ENCODE measurements at regions of chr10 and their contacts with region 1.

Region 1: GRCh38 chr10:114876602-114877300 is 55.2 kb downstream of the FHIP2A start:
- DNase-seq: peak; percentile 43 to 73 (median 59)
- ATAC-seq: peak; percentile 96
- H3K4me3 ChIP-seq: no peak overlapping the region
- H3K27ac ChIP-seq: no peak overlapping the region
- H3K4me1 ChIP-seq: peaks cover 0 to 2% of the 10 kb centered on the region in 2 experiments; a peak in 2 of 5 replicates
- H3K27me3 ChIP-seq: peaks cover 0 to 7% of the 10 kb centered on the region in 2 experiments; a peak in 1 of 5 replicates
- CTCF ChIP-seq: peak; percentile 77 to 96 (median 87)
- EP300 ChIP-seq: no peak
- POLR2A ChIP-seq: no peak
- RAD21 ChIP-seq: peak; percentile 72 to 79

Region 2: DNA sequence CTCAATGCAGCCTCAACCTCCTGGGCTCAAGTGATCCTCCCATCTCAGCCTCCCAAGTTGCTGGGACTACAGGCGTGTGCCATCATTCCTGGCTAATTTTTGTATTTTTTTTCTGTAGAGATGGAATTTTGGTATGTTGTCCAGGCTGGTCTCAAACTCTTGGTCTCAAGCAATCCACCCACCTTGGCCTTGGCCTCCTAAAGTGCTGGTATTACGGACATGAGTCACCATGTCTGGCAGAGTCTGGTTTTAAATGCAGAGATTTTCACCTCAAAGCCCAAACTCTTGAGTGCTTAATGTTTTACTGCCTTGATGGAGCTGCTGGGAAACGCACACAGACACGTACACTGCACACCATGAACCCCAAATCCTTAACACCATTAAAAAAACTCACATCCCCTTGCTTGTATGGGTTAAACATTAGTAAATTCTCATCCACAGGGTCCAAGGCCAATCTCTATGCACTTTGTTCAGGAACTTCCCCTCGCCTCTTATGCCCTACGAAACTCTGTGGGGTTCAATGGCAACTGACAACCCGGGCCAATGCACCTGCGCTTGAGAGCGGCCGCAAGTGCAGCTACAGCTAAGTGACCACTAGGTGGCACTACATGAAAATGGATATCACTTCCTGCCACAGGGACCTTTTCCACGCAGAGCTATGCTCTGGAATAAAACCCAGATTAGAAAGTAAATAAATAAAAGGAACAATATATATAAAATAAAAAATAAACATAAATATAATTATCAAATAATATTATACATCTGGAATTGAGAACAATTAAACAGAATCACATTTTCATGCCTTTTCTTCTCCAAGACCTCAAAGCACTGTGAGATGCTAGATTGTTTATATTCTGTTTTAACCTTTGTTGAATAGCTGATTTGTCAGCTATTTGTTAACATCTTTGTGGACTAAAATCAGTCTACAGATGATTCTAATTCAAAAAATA is 405.5 kb before region 1 on chr10:
- CTCF ChIA-PET with region 1: no interaction called
- POLR2A ChIA-PET with region 1: no interaction called
- in situ Hi-C with region 1: no loop called
- intact Hi-C with region 1: loop called (anchors 5 kb)
- DNase-seq: peak; percentile 41 to 62 (median 60)
- ATAC-seq: peak; percentile 90
- H3K4me3 ChIP-seq: no peak overlapping the region
- H3K27ac ChIP-seq: no peak overlapping the region
- H3K4me1 ChIP-seq: no peaks in the 10 kb centered on the region
- H3K27me3 ChIP-seq: peaks cover 0 to 3% of the 10 kb centered on the region in 2 experiments; a peak in 1 of 5 replicates
- CTCF ChIP-seq: peak; percentile 63 to 67 (median 65)
- EP300 ChIP-seq: no peak
- POLR2A ChIP-seq: no peak
- RAD21 ChIP-seq: peak; percentile 35 to 47; a peak in 2 of 4 replicates

Region 3: GRCh38 chr10:114550756-114551635 is 325.8 kb before region 1 on chr10:
- CTCF ChIA-PET with region 1: no interaction called
- POLR2A ChIA-PET with region 1: no interaction called
- in situ Hi-C with region 1: no loop called
- intact Hi-C with region 1: loop called (anchors 5 kb)
- DNase-seq: peak in 1 of 4 experiments; percentile 5
- ATAC-seq: no peak
- H3K4me3 ChIP-seq: no peak overlapping the region
- H3K27ac ChIP-seq: no peak overlapping the region
- H3K4me1 ChIP-seq: no peaks in the 10 kb centered on the region
- H3K27me3 ChIP-seq: no peaks in the 10 kb centered on the region
- CTCF ChIP-seq: peak in 2 of 3 experiments; percentile 29 to 39; a peak in 2 of 6 replicates
- EP300 ChIP-seq: no peak
- POLR2A ChIP-seq: no peak
- RAD21 ChIP-seq: peak; percentile 37 to 54

Region 4: GRCh38 chr10:114825513-114826253 is 51.1 kb before region 1 on chr10:
- CTCF ChIA-PET with region 1: no interaction called
- POLR2A ChIA-PET with region 1: no interaction called
- in situ Hi-C with region 1: no loop called
- intact Hi-C with region 1: no loop called
- DNase-seq: no peak
- ATAC-seq: no peak
- H3K4me3 ChIP-seq: no peak overlapping the region
- H3K27ac ChIP-seq: no peak overlapping the region
- H3K4me1 ChIP-seq: no peaks in the 10 kb centered on the region; a peak in 2 of 5 replicates
- H3K27me3 ChIP-seq: no peaks in the 10 kb centered on the region
- CTCF ChIP-seq: no peak
- EP300 ChIP-seq: no peak
- POLR2A ChIP-seq: no peak
- RAD21 ChIP-seq: no peak

Region 5: DNA sequence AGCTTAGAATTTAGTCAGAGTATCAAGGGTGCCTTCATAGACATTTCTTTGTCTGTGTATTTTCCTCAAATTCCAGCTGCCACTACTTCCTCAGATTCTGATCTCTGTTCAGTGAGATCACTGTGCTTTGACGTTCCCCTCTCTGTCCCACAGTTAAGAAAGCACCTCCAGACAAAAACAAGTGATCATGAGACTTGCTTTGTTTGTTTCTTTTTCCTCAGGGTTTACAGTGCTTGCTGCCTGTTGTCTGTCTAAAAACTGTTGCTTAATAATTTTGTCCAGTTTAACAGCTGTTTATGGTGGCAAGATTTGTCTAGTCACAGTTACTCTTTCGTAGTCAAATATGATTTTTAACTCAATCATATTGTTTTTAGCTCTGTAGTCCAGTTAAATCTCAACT is 90.3 kb after region 1 on chr10:
- CTCF ChIA-PET with region 1: no interaction called
- POLR2A ChIA-PET with region 1: no interaction called
- in situ Hi-C with region 1: no loop called
- intact Hi-C with region 1: no loop called
- DNase-seq: peak in 1 of 4 experiments; percentile 0
- ATAC-seq: peak; percentile 49; the same call in 2 of the 3 replicates
- H3K4me3 ChIP-seq: no peak overlapping the region
- H3K27ac ChIP-seq: peak overlapping the region; percentile 36; the same call in 1 of the 3 replicates
- H3K4me1 ChIP-seq: no peaks in the 10 kb centered on the region
- H3K27me3 ChIP-seq: no peaks in the 10 kb centered on the region
- CTCF ChIP-seq: no peak
- EP300 ChIP-seq: no peak
- POLR2A ChIP-seq: no peak
- RAD21 ChIP-seq: no peak

Region 6: GRCh38 chr10:115026056-115026745 is 149.4 kb after region 1 on chr10:
- CTCF ChIA-PET with region 1: no interaction called
- POLR2A ChIA-PET with region 1: no interaction called
- in situ Hi-C with region 1: no loop called
- intact Hi-C with region 1: loop called (anchors 10 kb)
- DNase-seq: peak in 1 of 4 experiments; percentile 3
- ATAC-seq: peak; percentile 62; the same call in 1 of the 3 replicates
- H3K4me3 ChIP-seq: no peak overlapping the region
- H3K27ac ChIP-seq: no peak overlapping the region
- H3K4me1 ChIP-seq: no peaks in the 10 kb centered on the region
- H3K27me3 ChIP-seq: peaks cover 0 to 5% of the 10 kb centered on the region in 2 experiments; a peak in 1 of 5 replicates
- CTCF ChIP-seq: peak in 1 of 3 experiments; percentile 8; a peak in 1 of 6 replicates
- EP300 ChIP-seq: no peak
- POLR2A ChIP-seq: no peak
- RAD21 ChIP-seq: no peak

Region 7: DNA sequence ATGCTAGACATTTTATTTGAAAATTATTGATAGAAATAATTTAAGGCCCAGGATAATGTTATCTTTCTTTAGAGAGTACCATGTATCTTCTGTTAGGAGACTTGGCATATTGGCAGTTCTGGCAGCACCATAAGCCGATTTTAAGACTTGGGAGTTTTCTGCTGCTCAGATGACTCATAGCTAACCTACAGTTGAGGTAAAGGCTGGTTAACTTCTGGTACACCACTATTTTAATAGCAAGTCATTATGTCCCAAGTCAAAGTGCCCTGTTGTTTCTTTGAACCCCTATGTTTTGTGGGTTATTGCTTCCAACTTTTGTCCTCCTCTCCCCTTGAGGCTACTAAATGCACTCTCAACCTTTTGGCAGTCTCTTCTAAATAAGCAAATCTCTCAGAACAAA is 241.6 kb after region 1 on chr10:
- CTCF ChIA-PET with region 1: interaction called, 3 read pairs
- POLR2A ChIA-PET with region 1: no interaction called
- in situ Hi-C with region 1: loop called (anchors 25 kb)
- intact Hi-C with region 1: no loop called
- DNase-seq: no peak
- ATAC-seq: no peak
- H3K4me3 ChIP-seq: no peak overlapping the region
- H3K27ac ChIP-seq: no peak overlapping the region
- H3K4me1 ChIP-seq: no peaks in the 10 kb centered on the region
- H3K27me3 ChIP-seq: no peaks in the 10 kb centered on the region
- CTCF ChIP-seq: no peak
- EP300 ChIP-seq: no peak
- POLR2A ChIP-seq: no peak
- RAD21 ChIP-seq: no peak

Region 8: GRCh38 chr10:115129752-115130151 is 253.0 kb after region 1 on chr10:
- CTCF ChIA-PET with region 1: interaction called, 4 read pairs
- POLR2A ChIA-PET with region 1: no interaction called
- in situ Hi-C with region 1: loop called (anchors 25 kb)
- intact Hi-C with region 1: loop called (anchors 1 kb)
- DNase-seq: peak in 1 of 4 experiments; percentile 8
- ATAC-seq: no peak
- H3K4me3 ChIP-seq: no peak overlapping the region
- H3K27ac ChIP-seq: no peak overlapping the region
- H3K4me1 ChIP-seq: no peaks in the 10 kb centered on the region
- H3K27me3 ChIP-seq: no peaks in the 10 kb centered on the region
- CTCF ChIP-seq: peak in 1 of 3 experiments; percentile 42; a peak in 2 of 6 replicates
- EP300 ChIP-seq: no peak
- POLR2A ChIP-seq: no peak
- RAD21 ChIP-seq: peak; percentile 53